CD4-positive, alpha-beta T cell (primary cell): ENCODE measurements at regions of chr9 and their contacts with region 1.

Region 1: DNA sequence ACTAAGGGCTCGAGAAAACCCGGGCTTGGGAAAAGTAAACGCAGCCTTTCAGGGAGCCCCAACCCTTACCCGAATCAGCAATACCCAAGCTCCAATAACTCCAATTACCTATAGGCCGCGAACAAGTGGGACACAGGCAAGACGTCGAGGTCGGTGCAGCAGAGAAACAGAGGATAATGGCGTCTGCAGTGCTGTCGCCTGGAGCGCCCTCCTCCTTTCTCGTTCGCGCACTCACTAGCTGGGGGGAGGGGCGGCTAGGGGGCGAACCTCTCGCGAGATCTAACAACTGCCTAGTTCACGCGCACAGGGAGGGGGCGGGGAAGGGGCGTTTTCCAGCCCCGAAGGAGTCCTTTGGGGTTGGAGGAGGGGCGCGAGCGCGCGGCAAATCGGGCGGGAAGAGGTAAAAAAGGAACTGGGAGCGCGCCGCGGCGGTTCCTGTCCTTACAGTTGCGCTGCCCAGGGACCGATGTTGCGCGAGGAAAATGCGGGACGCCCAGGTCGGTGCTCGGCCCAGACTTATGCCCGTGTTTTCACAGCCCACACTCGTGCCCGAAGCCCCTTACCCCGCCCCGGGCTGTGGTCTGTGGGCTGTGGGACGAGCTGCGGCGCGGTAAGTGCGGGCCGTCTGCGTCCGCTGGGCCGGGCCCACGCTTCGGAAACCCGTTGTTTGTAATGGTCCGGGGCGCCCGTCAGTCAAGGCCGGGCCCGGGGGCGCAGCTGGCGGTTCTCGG is at the start of gene RMI1:
- DNase-seq: peak; percentile 98 to 100 (median 99)
- ATAC-seq: peak; percentile 77
- H3K4me3 ChIP-seq: peak within 1 kb of the TSS; percentile 100
- H3K4me3 Mint-ChIP-seq: peak within 1 kb of the TSS; percentile 100
- H3K27ac ChIP-seq: peak within 1 kb of the TSS; percentile 98 to 100
- H3K27ac Mint-ChIP-seq: peak within 1 kb of the TSS; percentile 100
- H3K4me1 ChIP-seq: peaks cover 10% of the 10 kb centered on the region
- H3K4me1 Mint-ChIP-seq: peaks cover 51% of the 10 kb centered on the region
- H3K27me3 ChIP-seq: no peaks in the 10 kb centered on the region
- H3K27me3 Mint-ChIP-seq: no peaks in the 10 kb centered on the region
- CTCF ChIP-seq: no peak
- total RNA-seq, gene RMI1: 0.66 to 1.2 TPM

Region 2: DNA sequence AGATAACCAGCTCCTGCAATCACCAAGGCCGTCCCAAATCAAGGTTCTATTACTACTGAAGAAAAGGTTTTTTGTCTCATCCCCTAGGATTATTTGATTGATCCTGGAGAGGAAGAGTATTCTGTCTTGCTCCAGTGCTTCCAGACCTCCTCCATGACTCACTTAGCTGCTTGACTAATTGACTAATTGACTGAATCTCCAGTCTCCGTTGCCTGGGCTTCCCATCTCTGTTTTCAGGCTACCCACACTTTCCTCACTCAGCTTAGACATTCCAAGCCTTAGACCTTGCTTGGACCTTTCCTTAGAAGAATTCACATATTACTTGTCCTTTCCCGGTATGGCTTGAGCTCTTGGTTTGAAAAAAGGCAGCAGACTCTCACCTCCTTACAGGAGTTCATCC is 503.0 kb before region 1 on chr9:
- CTCF ChIA-PET with region 1: no interaction called
- POLR2A ChIA-PET with region 1: no interaction called
- intact Hi-C with region 1: no loop called
- DNase-seq: no peak
- ATAC-seq: no peak
- H3K4me3 ChIP-seq: no peak overlapping the region
- H3K4me3 Mint-ChIP-seq: no peak overlapping the region
- H3K27ac ChIP-seq: no peak overlapping the region
- H3K27ac Mint-ChIP-seq: no peak overlapping the region
- H3K4me1 ChIP-seq: peaks cover 3% of the 10 kb centered on the region
- H3K4me1 Mint-ChIP-seq: peaks cover 12% of the 10 kb centered on the region
- H3K27me3 ChIP-seq: no peaks in the 10 kb centered on the region
- H3K27me3 Mint-ChIP-seq: no peaks in the 10 kb centered on the region
- CTCF ChIP-seq: no peak

Region 3: GRCh38 chr9:83622939-83623678 is 357.5 kb before region 1 on chr9 and contains the start of gene IDNK:
- CTCF ChIA-PET with region 1: no interaction called
- POLR2A ChIA-PET with region 1: interaction called, 17 read pairs
- intact Hi-C with region 1: loop called in 1 of 2 experiments (anchors 5 kb)
- DNase-seq: peak; percentile 37 to 84 (median 52)
- ATAC-seq: peak; percentile 88
- H3K4me3 ChIP-seq: peak within 1 kb of the TSS; percentile 73
- H3K4me3 Mint-ChIP-seq: peak within 1 kb of the TSS; percentile 99
- H3K27ac ChIP-seq: peak within 1 kb of the TSS; percentile 78 to 86
- H3K27ac Mint-ChIP-seq: peak within 1 kb of the TSS; percentile 97
- H3K4me1 ChIP-seq: peaks cover 26% of the 10 kb centered on the region
- H3K4me1 Mint-ChIP-seq: peaks cover 28% of the 10 kb centered on the region
- H3K27me3 ChIP-seq: no peaks in the 10 kb centered on the region
- H3K27me3 Mint-ChIP-seq: no peaks in the 10 kb centered on the region
- CTCF ChIP-seq: no peak
- total RNA-seq, gene IDNK: 5.4 to 5.6 TPM

Region 4: GRCh38 chr9:83920927-83921707 is 59.4 kb before region 1 on chr9 and contains the start of gene KIF27:
- CTCF ChIA-PET with region 1: interaction called, 5 read pairs
- POLR2A ChIA-PET with region 1: interaction called, 51 read pairs
- intact Hi-C with region 1: loop called (anchors 1 to 2 kb)
- DNase-seq: peak; percentile 91 to 97 (median 95)
- ATAC-seq: peak; percentile 83
- H3K4me3 ChIP-seq: peak within 1 kb of the TSS; percentile 69
- H3K4me3 Mint-ChIP-seq: peak within 1 kb of the TSS; percentile 98
- H3K27ac ChIP-seq: peak within 1 kb of the TSS; percentile 85 to 91
- H3K27ac Mint-ChIP-seq: peak within 1 kb of the TSS; percentile 91
- H3K4me1 ChIP-seq: peaks cover 14% of the 10 kb centered on the region
- H3K4me1 Mint-ChIP-seq: peaks cover 17% of the 10 kb centered on the region
- H3K27me3 ChIP-seq: no peaks in the 10 kb centered on the region
- H3K27me3 Mint-ChIP-seq: no peaks in the 10 kb centered on the region
- CTCF ChIP-seq: peak; percentile 79
- total RNA-seq, gene KIF27: 3.6 to 5.1 TPM

Region 5: GRCh38 chr9:83965350-83966208 is 15.0 kb before region 1 on chr9:
- CTCF ChIA-PET with region 1: no interaction called
- POLR2A ChIA-PET with region 1: interaction called, 77 read pairs
- intact Hi-C with region 1: loop called in 1 of 2 experiments (anchors 2 kb)
- DNase-seq: no peak
- ATAC-seq: peak; percentile 39
- H3K4me3 ChIP-seq: no peak overlapping the region
- H3K4me3 Mint-ChIP-seq: no peak overlapping the region
- H3K27ac ChIP-seq: no peak overlapping the region
- H3K27ac Mint-ChIP-seq: peak overlapping the region; percentile 31
- H3K4me1 ChIP-seq: no peaks in the 10 kb centered on the region
- H3K4me1 Mint-ChIP-seq: peaks cover 14% of the 10 kb centered on the region
- H3K27me3 ChIP-seq: no peaks in the 10 kb centered on the region
- H3K27me3 Mint-ChIP-seq: no peaks in the 10 kb centered on the region
- CTCF ChIP-seq: no peak

Region 6: GRCh38 chr9:84123648-84124406 is 143.3 kb after region 1 on chr9:
- CTCF ChIA-PET with region 1: no interaction called
- POLR2A ChIA-PET with region 1: no interaction called
- intact Hi-C with region 1: no loop called
- DNase-seq: no peak
- ATAC-seq: no peak
- H3K4me3 ChIP-seq: no peak overlapping the region
- H3K4me3 Mint-ChIP-seq: no peak overlapping the region
- H3K27ac ChIP-seq: no peak overlapping the region
- H3K27ac Mint-ChIP-seq: no peak overlapping the region
- H3K4me1 ChIP-seq: no peaks in the 10 kb centered on the region
- H3K4me1 Mint-ChIP-seq: no peaks in the 10 kb centered on the region
- H3K27me3 ChIP-seq: peaks cover 0 to 6% of the 10 kb centered on the region in 2 experiments
- H3K27me3 Mint-ChIP-seq: peaks cover 38% of the 10 kb centered on the region
- CTCF ChIP-seq: no peak

Region 7: DNA sequence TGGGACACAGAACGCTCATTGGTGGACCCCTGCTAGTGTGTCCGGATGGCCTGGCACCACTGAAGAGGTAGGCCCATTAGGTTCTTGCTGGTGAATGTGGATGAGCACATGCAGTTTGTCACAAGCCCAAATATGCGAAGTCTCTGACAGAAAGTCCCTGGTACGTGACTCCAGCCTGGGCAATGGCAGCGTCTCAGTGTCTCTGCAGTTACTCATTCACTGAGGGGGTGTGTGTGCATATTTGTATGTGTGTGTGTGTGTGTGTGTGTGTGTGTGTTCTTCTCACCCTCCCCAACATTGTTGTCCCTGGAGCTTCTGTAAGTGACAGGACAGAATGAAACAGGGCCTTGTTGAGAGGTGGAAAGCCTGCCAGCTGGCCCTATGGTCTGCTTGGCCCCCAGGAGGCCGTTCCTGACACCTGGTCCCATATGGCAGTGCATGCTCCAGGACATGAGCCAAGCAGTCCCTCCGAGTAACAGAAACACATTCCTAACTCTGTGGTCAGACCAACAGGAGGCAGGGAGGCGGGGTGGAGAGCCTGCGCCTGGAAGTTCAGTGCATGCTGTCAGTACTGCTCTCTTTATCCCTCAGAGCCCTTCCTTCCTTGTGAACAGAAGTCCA is 190.1 kb after region 1 on chr9:
- CTCF ChIA-PET with region 1: no interaction called
- POLR2A ChIA-PET with region 1: interaction called, 10 read pairs
- intact Hi-C with region 1: no loop called
- DNase-seq: no peak
- ATAC-seq: no peak
- H3K4me3 ChIP-seq: no peak overlapping the region
- H3K4me3 Mint-ChIP-seq: no peak overlapping the region
- H3K27ac ChIP-seq: no peak overlapping the region
- H3K27ac Mint-ChIP-seq: no peak overlapping the region
- H3K4me1 ChIP-seq: no peaks in the 10 kb centered on the region
- H3K4me1 Mint-ChIP-seq: no peaks in the 10 kb centered on the region
- H3K27me3 ChIP-seq: no peaks in the 10 kb centered on the region
- H3K27me3 Mint-ChIP-seq: no peaks in the 10 kb centered on the region
- CTCF ChIP-seq: no peak

Region 8: GRCh38 chr9:85940832-85941621 is 1960.5 kb after region 1 on chr9 and contains the start of gene NAA35:
- CTCF ChIA-PET with region 1: no interaction called
- POLR2A ChIA-PET with region 1: interaction called, 3 read pairs
- intact Hi-C with region 1: loop called (anchors 10 kb)
- DNase-seq: peak; percentile 98 to 100 (median 99)
- ATAC-seq: peak; percentile 85
- H3K4me3 ChIP-seq: peak within 1 kb of the TSS; percentile 81
- H3K4me3 Mint-ChIP-seq: peak within 1 kb of the TSS; percentile 94
- H3K27ac ChIP-seq: peak within 1 kb of the TSS; percentile 80 to 82
- H3K27ac Mint-ChIP-seq: no peak within 1 kb of the TSS
- H3K4me1 ChIP-seq: peaks cover 24% of the 10 kb centered on the region
- H3K4me1 Mint-ChIP-seq: peaks cover 9% of the 10 kb centered on the region
- H3K27me3 ChIP-seq: no peaks in the 10 kb centered on the region
- H3K27me3 Mint-ChIP-seq: no peaks in the 10 kb centered on the region
- CTCF ChIP-seq: no peak
- total RNA-seq, gene NAA35: 19.4 to 19.8 TPM